Activated T-helper 1 cell treated with anti-CD3 and anti-CD28 coated beads, Interleukin-12 subunit alpha, Interleukin-12 subunit beta, Interleukin-2, Interleukin-4 antibody, amounts not matched to agents 30 ng/mL and 10 ng/mL and 1 ng/mL, durations not matched to agents 14 hours and 24 hours and 36 hours (primary cell): ENCODE measurements at regions of chr2 and their contacts with region 1.

Region 1: DNA sequence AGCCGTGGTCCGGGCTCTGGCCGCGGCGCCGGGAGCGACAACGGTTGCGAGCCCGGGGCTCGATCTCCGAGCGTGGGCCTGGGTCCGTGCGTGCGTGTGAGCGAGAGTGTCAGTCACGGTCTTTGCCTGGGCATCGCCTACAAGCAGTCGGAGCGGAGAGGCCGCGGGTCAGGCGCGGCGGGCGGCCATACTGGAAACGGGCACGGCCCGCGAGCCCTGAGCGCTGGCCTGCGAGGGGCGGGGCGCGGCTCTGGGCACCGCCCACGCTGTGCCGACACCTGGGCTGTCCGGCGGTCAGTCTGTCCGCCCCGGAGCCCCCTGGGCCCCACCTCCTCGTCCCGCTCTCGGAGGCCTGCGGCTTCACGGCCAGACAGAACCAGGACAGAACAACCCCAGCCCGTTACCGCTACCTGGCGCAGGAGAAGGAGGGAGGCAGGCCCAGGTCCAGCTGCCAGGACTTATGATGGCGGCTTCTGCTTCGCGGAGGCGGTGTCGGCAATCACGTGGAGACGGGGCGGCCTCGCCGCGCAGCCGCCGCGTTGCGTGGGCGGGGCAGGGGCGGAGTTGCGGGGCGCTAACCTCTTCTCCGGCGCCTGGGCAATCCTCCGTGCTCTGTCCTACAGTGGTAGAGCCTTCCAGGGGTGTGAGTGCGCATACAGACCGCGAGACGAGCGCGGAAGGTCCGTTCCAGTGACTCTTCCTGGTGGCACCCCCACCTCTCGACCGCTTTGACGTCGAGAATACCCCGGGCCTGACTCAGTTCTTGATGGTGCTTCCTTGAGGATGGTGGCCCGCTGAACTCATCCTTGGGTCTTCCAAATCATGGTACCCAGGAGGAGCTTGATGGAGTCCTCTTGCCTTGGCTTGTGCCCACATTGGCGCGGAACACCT is at the start of gene TMEM131:
- DNase-seq: peak; percentile 94
- H3K4me3 Mint-ChIP-seq: peak within 1 kb of the TSS; percentile 97
- H3K27ac Mint-ChIP-seq: peak within 1 kb of the TSS; percentile 98
- H3K4me1 Mint-ChIP-seq: peaks cover 39% of the 10 kb centered on the region
- H3K27me3 Mint-ChIP-seq: peaks cover 4% of the 10 kb centered on the region
- total RNA-seq, gene TMEM131: 36.5 and 38.4 TPM in 2 replicates

Region 2: GRCh38 chr2:96449174-96449573 is 1546.8 kb before region 1 on chr2:
- intact Hi-C with region 1: no loop called
- DNase-seq: no peak
- H3K4me3 Mint-ChIP-seq: no peak overlapping the region
- H3K27ac Mint-ChIP-seq: no peak overlapping the region
- H3K4me1 Mint-ChIP-seq: no peaks in the 10 kb centered on the region
- H3K27me3 Mint-ChIP-seq: peaks cover 2% of the 10 kb centered on the region

Region 3: DNA sequence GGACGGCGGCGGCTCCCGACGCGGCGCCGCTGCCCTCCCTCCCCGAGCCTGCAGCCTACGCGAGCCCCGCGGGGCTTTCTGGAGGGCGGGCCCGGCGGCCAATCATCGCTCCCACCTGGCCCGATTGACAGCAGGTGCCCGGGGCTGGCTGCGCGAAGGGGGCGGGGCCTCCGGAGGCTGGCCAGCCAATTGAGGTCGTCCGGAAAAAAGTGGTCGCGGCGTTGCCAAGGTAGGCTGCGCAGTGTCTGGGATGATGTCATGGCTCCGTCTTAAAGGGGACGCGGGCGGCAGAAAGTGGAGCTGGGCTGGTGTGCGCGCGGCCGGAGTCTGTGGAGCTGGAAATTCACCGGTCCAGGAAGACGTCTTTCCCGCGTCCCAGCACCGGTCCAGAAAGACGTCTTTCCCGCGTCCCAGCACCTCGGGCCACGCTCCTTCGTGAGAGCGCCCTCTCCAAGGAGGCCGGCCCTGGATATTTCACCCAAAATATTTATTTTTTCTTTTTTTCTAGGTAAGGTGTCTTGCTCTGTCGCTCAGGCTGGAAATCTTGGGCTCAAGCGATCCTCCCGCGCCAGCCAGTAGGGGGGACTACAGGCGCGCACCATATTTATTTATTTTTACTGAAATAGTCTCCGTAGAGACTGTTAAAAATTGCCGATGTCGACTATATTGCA is 331.9 kb before region 1 on chr2 and contains the start of gene ACTR1B:
- intact Hi-C with region 1: loop called (anchors 1 kb)
- DNase-seq: peak; percentile 98
- H3K4me3 Mint-ChIP-seq: peak within 1 kb of the TSS; percentile 94
- H3K27ac Mint-ChIP-seq: peak within 1 kb of the TSS; percentile 97
- H3K4me1 Mint-ChIP-seq: peaks cover 39% of the 10 kb centered on the region
- H3K27me3 Mint-ChIP-seq: no peaks in the 10 kb centered on the region
- total RNA-seq, gene ACTR1B: 101 and 102 TPM in 2 replicates

Region 4: DNA sequence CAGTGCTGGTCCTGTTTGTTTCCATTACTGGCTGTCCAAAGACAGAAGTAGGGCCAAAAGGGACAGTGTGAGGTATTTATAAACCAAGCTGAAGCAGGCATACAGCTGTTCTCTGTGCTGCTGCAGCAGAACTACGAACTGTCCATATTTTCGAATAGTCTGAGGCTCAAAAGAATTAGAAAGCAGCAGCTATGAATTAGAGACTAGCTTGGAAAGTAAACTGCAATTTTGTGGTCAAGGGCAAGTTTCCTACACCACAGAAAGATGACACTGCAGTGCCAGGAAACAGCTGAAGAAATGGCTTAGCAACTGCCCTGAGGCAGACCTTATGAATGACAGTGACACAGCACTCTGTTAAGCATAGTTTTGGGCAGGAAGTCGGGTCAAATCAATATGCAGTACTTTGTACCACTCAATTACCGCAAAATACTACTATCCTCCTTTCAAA is 125.6 kb before region 1 on chr2:
- intact Hi-C with region 1: loop called (anchors 1 kb)
- DNase-seq: peak; percentile 62
- H3K4me3 Mint-ChIP-seq: peak overlapping the region; percentile 1
- H3K27ac Mint-ChIP-seq: peak overlapping the region; percentile 60
- H3K4me1 Mint-ChIP-seq: peaks cover 35% of the 10 kb centered on the region
- H3K27me3 Mint-ChIP-seq: no peaks in the 10 kb centered on the region

Region 5: GRCh38 chr2:98012561-98012991 is 16.6 kb after region 1 on chr2:
- intact Hi-C with region 1: loop called (anchors 1 kb)
- DNase-seq: no peak
- H3K4me3 Mint-ChIP-seq: no peak overlapping the region
- H3K27ac Mint-ChIP-seq: peak overlapping the region; percentile 78
- H3K4me1 Mint-ChIP-seq: peaks cover 34% of the 10 kb centered on the region
- H3K27me3 Mint-ChIP-seq: no peaks in the 10 kb centered on the region

Region 6: DNA sequence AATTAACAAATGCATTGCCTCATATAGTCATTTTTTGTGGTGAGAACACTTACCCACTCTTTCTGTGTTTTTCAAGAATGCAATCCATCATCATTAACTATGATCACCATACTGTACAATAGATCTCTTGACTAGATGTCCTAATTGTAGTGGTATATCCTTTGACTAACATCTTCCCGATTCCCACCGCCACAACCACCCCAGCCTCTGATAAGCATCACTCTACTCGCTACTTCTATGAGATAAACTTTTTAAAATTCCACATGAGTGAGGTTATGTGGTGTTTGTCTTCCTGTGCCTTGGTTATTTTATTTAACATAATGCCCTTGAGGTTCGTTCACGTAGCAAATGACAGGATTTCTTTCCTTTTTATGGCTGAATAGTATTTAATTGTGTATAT is 97.6 kb after region 1 on chr2:
- intact Hi-C with region 1: no loop called
- DNase-seq: no peak
- H3K4me3 Mint-ChIP-seq: no peak overlapping the region
- H3K27ac Mint-ChIP-seq: no peak overlapping the region
- H3K4me1 Mint-ChIP-seq: no peaks in the 10 kb centered on the region
- H3K27me3 Mint-ChIP-seq: peaks cover 17% of the 10 kb centered on the region

Region 7: GRCh38 chr2:98269274-98269673 is 273.3 kb after region 1 on chr2:
- intact Hi-C with region 1: loop called (anchors 1 kb)
- DNase-seq: no peak
- H3K4me3 Mint-ChIP-seq: no peak overlapping the region
- H3K27ac Mint-ChIP-seq: no peak overlapping the region
- H3K4me1 Mint-ChIP-seq: no peaks in the 10 kb centered on the region
- H3K27me3 Mint-ChIP-seq: peaks cover 10% of the 10 kb centered on the region

Region 8: GRCh38 chr2:99337113-99338028 is 1341.4 kb after region 1 on chr2 and contains the start of gene EIF5B:
- intact Hi-C with region 1: loop called (anchors 10 kb)
- DNase-seq: peak; percentile 93
- H3K4me3 Mint-ChIP-seq: no peak within 1 kb of the TSS
- H3K27ac Mint-ChIP-seq: no peak within 1 kb of the TSS
- H3K4me1 Mint-ChIP-seq: peaks cover 47% of the 10 kb centered on the region
- H3K27me3 Mint-ChIP-seq: no peaks in the 10 kb centered on the region
- total RNA-seq, gene EIF5B: 84.7 and 84.8 TPM in 2 replicates